IMR-90 (cell line): ENCODE measurements at regions of chr5 and their contacts with region 1.

Region 1: GRCh38 chr5:21142791-21143190 is 1154.8 kb upstream of the CDH18 start:
- DNase-seq: no peak
- ATAC-seq: no peak
- H3K4me3 ChIP-seq: no peak overlapping the region
- H3K27ac ChIP-seq: no peak overlapping the region
- H3K4me1 ChIP-seq: no peaks in the 10 kb centered on the region
- H3K27me3 ChIP-seq: no peaks in the 10 kb centered on the region
- CTCF ChIP-seq: no peak
- POLR2A ChIP-seq: no peak
- RAD21 ChIP-seq: no peak

Region 2: DNA sequence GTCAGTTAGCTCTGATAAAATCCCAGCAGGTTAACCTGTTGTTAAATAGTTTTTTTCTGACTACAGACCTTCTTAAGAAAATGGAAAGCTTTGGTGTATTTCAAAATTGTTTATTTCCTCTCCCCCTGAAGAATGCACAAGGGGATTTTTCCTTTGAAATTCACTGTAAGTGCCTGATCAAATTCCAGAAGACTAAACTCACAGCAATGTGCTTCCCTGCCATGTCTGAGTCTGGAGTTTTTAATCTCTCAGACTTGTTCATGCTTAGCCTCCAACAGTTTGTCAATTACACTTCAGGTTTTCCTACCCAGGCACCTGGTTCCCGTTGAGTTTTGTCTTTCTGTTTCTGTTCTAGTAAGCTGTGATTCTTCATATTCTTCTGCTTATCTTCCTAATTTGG is 193.2 kb before region 1 on chr5:
- CTCF ChIA-PET with region 1: no interaction called
- POLR2A ChIA-PET with region 1: no interaction called
- dilution Hi-C with region 1: no loop called
- in situ Hi-C with region 1: no loop called
- intact Hi-C with region 1: loop called (anchors 5 kb)
- DNase-seq: no peak
- ATAC-seq: no peak
- H3K4me3 ChIP-seq: no peak overlapping the region
- H3K27ac ChIP-seq: no peak overlapping the region
- H3K4me1 ChIP-seq: no peaks in the 10 kb centered on the region
- H3K27me3 ChIP-seq: no peaks in the 10 kb centered on the region
- CTCF ChIP-seq: no peak
- POLR2A ChIP-seq: no peak
- RAD21 ChIP-seq: no peak

Region 3: DNA sequence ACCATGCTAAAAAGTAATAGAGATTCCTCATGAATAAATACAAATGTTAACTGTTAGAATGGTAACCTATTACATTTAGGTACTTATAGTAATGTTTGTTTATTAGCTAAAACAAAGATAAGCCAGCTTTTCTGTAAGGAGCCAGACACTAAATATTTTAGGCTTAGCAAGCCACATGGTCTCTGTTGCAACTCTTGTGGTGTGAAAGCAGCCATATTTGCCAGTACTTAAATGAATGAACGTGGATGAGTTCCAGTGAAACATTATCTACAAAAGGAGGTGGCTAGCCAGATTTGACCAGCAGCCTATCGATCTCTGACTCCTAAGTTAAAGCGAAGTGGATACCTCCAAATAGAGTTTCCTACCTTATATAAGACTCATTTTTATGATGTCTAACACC is 1378.7 kb after region 1 on chr5:
- CTCF ChIA-PET with region 1: no interaction called
- POLR2A ChIA-PET with region 1: no interaction called
- dilution Hi-C with region 1: no loop called
- in situ Hi-C with region 1: no loop called
- intact Hi-C with region 1: no loop called
- DNase-seq: no peak
- ATAC-seq: no peak
- H3K4me3 ChIP-seq: no peak overlapping the region
- H3K27ac ChIP-seq: no peak overlapping the region
- H3K4me1 ChIP-seq: no peaks in the 10 kb centered on the region
- H3K27me3 ChIP-seq: no peaks in the 10 kb centered on the region
- CTCF ChIP-seq: no peak
- POLR2A ChIP-seq: no peak
- RAD21 ChIP-seq: no peak